ENCODE measurements at regions of chr16 and their contacts with region 1.

Region 1: GRCh38 chr16:82639666-82640336 is 13.0 kb downstream of the CDH13 start:
- DNase-seq: peak; percentile 78 to 84
- H3K4me3 ChIP-seq: no peak overlapping the region
- H3K4me3 Mint-ChIP-seq: peak overlapping the region; percentile 9
- H3K27ac Mint-ChIP-seq: no peak overlapping the region
- H3K4me1 ChIP-seq: peaks cover 39% of the 10 kb centered on the region
- H3K4me1 Mint-ChIP-seq: peaks cover 32% of the 10 kb centered on the region
- H3K27me3 ChIP-seq: no peaks in the 10 kb centered on the region
- H3K27me3 Mint-ChIP-seq: no peaks in the 10 kb centered on the region
- CTCF ChIP-seq: peak; percentile 93 to 95

Region 2: GRCh38 chr16:82263521-82264143 is 376.2 kb before region 1 on chr16:
- CTCF ChIA-PET with region 1: no interaction called
- POLR2A ChIA-PET with region 1: no interaction called
- intact Hi-C with region 1: loop called (anchors 1 kb)
- DNase-seq: peak; percentile 61 to 73
- H3K4me3 ChIP-seq: no peak overlapping the region
- H3K4me3 Mint-ChIP-seq: no peak overlapping the region
- H3K27ac Mint-ChIP-seq: no peak overlapping the region
- H3K4me1 ChIP-seq: 0 out of 2 replicates have a peak, but pooled peaks cover 3% of the 10 kb centered on the region
- H3K4me1 Mint-ChIP-seq: peaks cover 4% of the 10 kb centered on the region
- H3K27me3 ChIP-seq: no peaks in the 10 kb centered on the region
- H3K27me3 Mint-ChIP-seq: peaks cover 22% of the 10 kb centered on the region
- CTCF ChIP-seq: peak; percentile 96

Region 3: GRCh38 chr16:82603784-82604411 is 35.9 kb before region 1 on chr16:
- CTCF ChIA-PET with region 1: interaction called, 5 read pairs
- POLR2A ChIA-PET with region 1: no interaction called
- intact Hi-C with region 1: loop called (anchors 1 kb)
- DNase-seq: peak; percentile 65 to 66
- H3K4me3 ChIP-seq: no peak overlapping the region
- H3K4me3 Mint-ChIP-seq: no peak overlapping the region
- H3K27ac Mint-ChIP-seq: no peak overlapping the region
- H3K4me1 ChIP-seq: peaks cover 23% of the 10 kb centered on the region
- H3K4me1 Mint-ChIP-seq: peaks cover 28% of the 10 kb centered on the region
- H3K27me3 ChIP-seq: no peaks in the 10 kb centered on the region
- H3K27me3 Mint-ChIP-seq: no peaks in the 10 kb centered on the region
- CTCF ChIP-seq: peak; percentile 64 to 88

Region 4: DNA sequence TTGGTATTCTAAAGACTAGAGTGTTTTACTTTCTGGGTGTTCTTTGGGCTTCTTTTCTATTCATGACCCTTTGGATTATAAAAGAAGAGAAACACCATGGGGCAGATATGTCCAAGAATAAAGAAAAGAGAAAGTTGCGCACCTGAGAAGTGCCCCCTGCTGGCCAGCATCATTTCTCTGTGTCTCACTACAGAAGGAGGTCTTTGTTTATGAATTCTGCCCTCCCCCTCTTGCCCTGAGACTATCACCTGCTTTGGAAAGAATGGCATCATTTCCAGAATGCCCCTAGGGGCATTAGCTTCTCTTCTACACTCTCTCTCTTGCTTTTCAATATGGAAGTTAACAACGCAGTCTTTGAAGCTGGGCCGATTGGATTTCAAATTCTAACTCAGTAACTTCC is 31.9 kb after region 1 on chr16:
- CTCF ChIA-PET with region 1: no interaction called
- POLR2A ChIA-PET with region 1: no interaction called
- intact Hi-C with region 1: loop called (anchors 1 kb)
- DNase-seq: peak in 1 of 2 experiments; percentile 34
- H3K4me3 ChIP-seq: no peak overlapping the region
- H3K4me3 Mint-ChIP-seq: no peak overlapping the region
- H3K27ac Mint-ChIP-seq: no peak overlapping the region
- H3K4me1 ChIP-seq: peaks cover 16% of the 10 kb centered on the region
- H3K4me1 Mint-ChIP-seq: peaks cover 9% of the 10 kb centered on the region
- H3K27me3 ChIP-seq: no peaks in the 10 kb centered on the region
- H3K27me3 Mint-ChIP-seq: no peaks in the 10 kb centered on the region
- CTCF ChIP-seq: peak; percentile 33 to 49

Region 5: DNA sequence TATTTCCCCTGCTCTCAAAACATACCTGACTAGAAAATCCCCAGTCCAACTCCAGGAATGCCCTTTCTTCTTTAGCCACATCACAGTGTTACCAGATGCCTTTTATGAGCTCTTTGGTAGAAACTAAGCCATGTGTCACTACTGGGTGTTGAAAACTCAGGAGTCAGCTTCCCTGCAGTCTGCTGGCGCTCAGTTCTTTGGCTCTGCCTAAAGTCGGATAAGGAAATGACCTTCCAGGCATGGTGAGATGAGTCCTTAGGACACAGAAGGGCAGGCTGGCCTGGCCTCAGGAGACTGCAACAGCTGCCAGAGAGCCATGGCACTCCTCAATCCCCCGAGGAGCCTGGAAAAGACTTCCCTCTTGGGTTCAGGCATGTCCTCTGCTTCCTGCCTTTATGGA is 76.0 kb after region 1 on chr16:
- CTCF ChIA-PET with region 1: no interaction called
- POLR2A ChIA-PET with region 1: no interaction called
- intact Hi-C with region 1: loop called (anchors 2 kb)
- DNase-seq: no peak
- H3K4me3 ChIP-seq: no peak overlapping the region
- H3K4me3 Mint-ChIP-seq: no peak overlapping the region
- H3K27ac Mint-ChIP-seq: no peak overlapping the region
- H3K4me1 ChIP-seq: no peaks in the 10 kb centered on the region
- H3K4me1 Mint-ChIP-seq: no peaks in the 10 kb centered on the region
- H3K27me3 ChIP-seq: no peaks in the 10 kb centered on the region
- H3K27me3 Mint-ChIP-seq: peaks cover 7% of the 10 kb centered on the region
- CTCF ChIP-seq: no peak

Region 6: GRCh38 chr16:82738699-82739098 is 98.9 kb after region 1 on chr16:
- CTCF ChIA-PET with region 1: interaction called, 3 read pairs
- POLR2A ChIA-PET with region 1: no interaction called
- intact Hi-C with region 1: loop called (anchors 2 kb)
- DNase-seq: peak in 1 of 2 experiments; percentile 8
- H3K4me3 ChIP-seq: no peak overlapping the region
- H3K4me3 Mint-ChIP-seq: no peak overlapping the region
- H3K27ac Mint-ChIP-seq: no peak overlapping the region
- H3K4me1 ChIP-seq: no peaks in the 10 kb centered on the region; the same call in 1 of the 2 replicates
- H3K4me1 Mint-ChIP-seq: no peaks in the 10 kb centered on the region
- H3K27me3 ChIP-seq: no peaks in the 10 kb centered on the region; the same call in 1 of the 2 replicates
- H3K27me3 Mint-ChIP-seq: peaks cover 20% of the 10 kb centered on the region
- CTCF ChIP-seq: peak; percentile 40 to 41